HepG2 (cell line): ENCODE measurements at regions of chr6 and their contacts with region 1.

Region 1: DNA sequence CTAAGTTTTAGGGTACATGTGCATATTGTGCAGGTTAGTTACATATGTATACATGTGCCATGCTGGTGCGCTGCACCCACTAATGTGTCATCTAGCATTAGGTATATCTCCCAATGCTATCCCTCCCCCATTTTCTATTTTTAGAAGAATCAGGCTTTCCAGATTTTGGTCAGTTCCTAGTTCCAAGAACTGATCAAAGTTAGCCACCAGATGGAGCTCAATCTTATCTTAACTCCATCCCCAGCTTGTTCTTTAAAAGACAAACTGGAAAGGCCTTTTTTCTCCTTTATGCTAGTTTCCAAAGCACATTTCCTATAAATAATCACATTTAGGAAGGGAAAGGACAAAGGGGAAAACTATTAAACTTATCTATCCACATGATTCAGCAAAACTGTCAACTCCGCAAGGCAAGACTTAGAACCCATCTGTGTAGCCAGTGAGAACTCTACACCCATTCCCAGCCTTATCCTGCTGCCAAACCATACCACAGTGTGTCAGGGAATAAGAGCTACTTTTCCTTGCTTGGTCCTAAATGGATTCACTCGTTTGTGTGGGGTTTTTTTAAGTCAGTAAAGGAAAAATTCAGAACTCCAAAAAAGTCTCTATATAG is 22.8 kb upstream of the KHDC1 start:
- DNase-seq: peak; percentile 25
- ATAC-seq: peak; percentile 78
- H3K4me3 ChIP-seq: no peak overlapping the region
- H3K27ac ChIP-seq: no peak overlapping the region
- H3K4me1 ChIP-seq: no peaks in the 10 kb centered on the region
- H3K27me3 ChIP-seq: peaks cover 0 to 4% of the 10 kb centered on the region in 2 experiments; a peak in 2 of 5 replicates
- CTCF ChIP-seq: peak; percentile 49
- EP300 ChIP-seq: no peak
- POLR2A ChIP-seq: no peak
- RAD21 ChIP-seq: no peak

Region 2: GRCh38 chr6:73231986-73232391 is 53.8 kb before region 1 on chr6:
- CTCF ChIA-PET with region 1: no interaction called
- POLR2A ChIA-PET with region 1: no interaction called
- in situ Hi-C with region 1: no loop called
- intact Hi-C with region 1: no loop called
- DNase-seq: no peak
- ATAC-seq: no peak
- H3K4me3 ChIP-seq: no peak overlapping the region
- H3K27ac ChIP-seq: no peak overlapping the region
- H3K4me1 ChIP-seq: no peaks in the 10 kb centered on the region
- H3K27me3 ChIP-seq: peaks cover 0 to 12% of the 10 kb centered on the region in 2 experiments; a peak in 1 of 5 replicates
- CTCF ChIP-seq: no peak
- EP300 ChIP-seq: no peak
- POLR2A ChIP-seq: no peak
- RAD21 ChIP-seq: no peak

Region 3: DNA sequence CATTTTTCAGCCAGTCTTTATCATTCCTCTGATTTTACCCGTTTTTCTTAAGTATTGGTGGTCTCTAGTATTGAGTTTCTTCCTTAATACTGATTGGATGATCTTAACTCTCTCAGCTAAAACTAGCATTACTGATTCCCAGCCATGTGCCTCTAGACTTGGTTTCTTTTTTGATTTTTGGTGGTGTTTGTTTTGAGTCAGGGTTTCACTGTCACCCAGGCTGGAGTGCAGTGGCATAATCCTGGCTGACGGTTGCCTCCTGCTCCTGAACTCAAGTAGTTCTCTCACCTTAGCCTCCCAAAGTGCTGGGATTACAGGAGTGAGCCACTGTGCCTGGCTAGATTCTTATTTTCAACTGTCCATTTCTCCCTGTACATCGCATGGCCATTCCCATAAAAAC is 43.4 kb after region 1 on chr6:
- CTCF ChIA-PET with region 1: interaction called, 9 read pairs
- POLR2A ChIA-PET with region 1: no interaction called
- in situ Hi-C with region 1: loop called (anchors 5 kb)
- intact Hi-C with region 1: loop called (anchors 1 kb)
- DNase-seq: no peak
- ATAC-seq: no peak
- H3K4me3 ChIP-seq: no peak overlapping the region
- H3K27ac ChIP-seq: no peak overlapping the region
- H3K4me1 ChIP-seq: no peaks in the 10 kb centered on the region
- H3K27me3 ChIP-seq: peaks cover 0 to 6% of the 10 kb centered on the region in 2 experiments; a peak in 2 of 5 replicates
- CTCF ChIP-seq: no peak
- EP300 ChIP-seq: no peak
- POLR2A ChIP-seq: no peak
- RAD21 ChIP-seq: no peak

Region 4: GRCh38 chr6:73388800-73389512 is 103.2 kb after region 1 on chr6:
- CTCF ChIA-PET with region 1: interaction called, 5 read pairs
- POLR2A ChIA-PET with region 1: no interaction called
- in situ Hi-C with region 1: no loop called
- intact Hi-C with region 1: loop called (anchors 1 kb)
- DNase-seq: peak; percentile 5
- ATAC-seq: peak; percentile 91
- H3K4me3 ChIP-seq: peak overlapping the region; percentile 55 to 74 (median 62)
- H3K27ac ChIP-seq: no peak overlapping the region
- H3K4me1 ChIP-seq: 0 out of 2 replicates have a peak, but pooled peaks cover 6% of the 10 kb centered on the region
- H3K27me3 ChIP-seq: peaks cover 0 to 6% of the 10 kb centered on the region in 2 experiments; a peak in 3 of 5 replicates
- CTCF ChIP-seq: peak; percentile 74
- EP300 ChIP-seq: no peak
- POLR2A ChIP-seq: no peak
- RAD21 ChIP-seq: no peak